ENCODE measurements at regions of chr15 and their contacts with region 1.

Region 1: GRCh38 chr15:84685304-84685703 is 27.3 kb upstream of the NMB start:
- DNase-seq: no peak
- ATAC-seq: no peak
- H3K4me3 Mint-ChIP-seq: no peak overlapping the region
- H3K27ac Mint-ChIP-seq: no peak overlapping the region
- H3K4me1 Mint-ChIP-seq: peaks cover 43% of the 10 kb centered on the region
- H3K27me3 Mint-ChIP-seq: no peaks in the 10 kb centered on the region
- CTCF ChIP-seq: no peak

Region 2: DNA sequence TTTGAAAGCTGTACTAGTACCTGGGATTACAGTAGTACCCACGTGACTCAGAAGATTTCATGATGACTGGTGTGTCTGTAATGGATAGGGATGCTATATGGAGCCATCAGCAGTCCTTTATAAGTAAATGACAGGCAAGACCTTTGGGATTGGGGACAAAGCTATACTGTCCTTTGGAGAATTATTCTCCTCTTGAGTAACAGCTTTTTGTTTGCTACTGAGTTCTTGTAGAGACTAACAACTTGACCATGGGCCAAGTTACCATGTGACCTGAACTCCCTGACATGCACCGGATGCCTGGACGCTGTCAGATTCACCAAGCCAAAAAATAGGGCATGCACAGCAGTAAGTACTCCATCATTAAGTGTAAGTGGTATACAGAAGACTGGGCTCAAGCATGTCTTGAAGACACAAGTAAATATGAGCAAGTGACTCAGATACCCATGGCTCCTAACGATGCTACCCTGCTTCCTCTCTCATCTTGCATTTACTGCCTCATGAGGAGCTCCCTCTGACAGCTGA is 17.7 kb after region 1 on chr15:
- CTCF ChIA-PET with region 1: no interaction called
- POLR2A ChIA-PET with region 1: no interaction called
- intact Hi-C with region 1: loop called (anchors 2 kb)
- DNase-seq: no peak
- ATAC-seq: no peak
- H3K4me3 Mint-ChIP-seq: no peak overlapping the region
- H3K27ac Mint-ChIP-seq: no peak overlapping the region
- H3K4me1 Mint-ChIP-seq: peaks cover 62% of the 10 kb centered on the region
- H3K27me3 Mint-ChIP-seq: no peaks in the 10 kb centered on the region
- CTCF ChIP-seq: no peak